ENCODE measurements at regions of chr19 and their contacts with region 1.

Region 1: DNA sequence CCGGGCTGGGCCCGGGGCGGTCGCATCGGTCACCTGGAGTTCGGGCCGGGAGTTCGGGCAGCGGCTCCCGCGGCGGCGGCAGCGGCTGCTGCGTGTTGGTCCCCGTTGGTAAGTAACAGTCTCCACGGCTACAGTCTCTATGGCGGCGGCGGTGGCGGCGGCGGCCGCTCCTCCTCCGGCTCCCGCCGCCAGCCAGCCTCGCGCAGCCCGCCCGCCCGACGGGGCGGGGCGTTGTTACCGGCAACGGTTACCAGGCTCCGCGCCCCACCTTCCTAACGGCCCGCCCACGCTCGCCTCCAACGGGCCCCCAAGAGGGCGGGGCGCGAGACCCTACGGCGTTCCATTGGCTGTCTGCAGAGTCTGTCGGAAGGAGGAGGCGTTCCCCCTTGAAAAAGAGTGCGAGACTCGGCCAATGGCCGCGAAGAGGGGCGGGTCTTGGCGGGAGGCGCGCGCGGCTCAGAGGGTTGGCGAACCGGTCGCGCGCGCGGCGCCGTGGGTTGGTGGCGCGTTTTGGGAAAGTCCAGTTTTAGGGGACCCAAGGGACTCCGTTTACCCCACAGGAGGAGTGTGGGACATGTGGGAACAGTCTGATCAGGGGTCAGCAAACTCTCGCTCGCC is at the start of gene RFX2:
- DNase-seq: peak; percentile 100
- ATAC-seq: peak; percentile 98
- H3K4me3 ChIP-seq: peak within 1 kb of the TSS; percentile 70
- H3K27ac ChIP-seq: no peak within 1 kb of the TSS
- H3K4me1 ChIP-seq: peaks cover 12% of the 10 kb centered on the region
- H3K27me3 ChIP-seq: no peaks in the 10 kb centered on the region
- CTCF ChIP-seq: no peak
- total RNA-seq, gene RFX2: 10.5 and 11.3 TPM in 2 replicates

Region 2: GRCh38 chr19:6066661-6067646 is 43.5 kb before region 1 on chr19:
- CTCF ChIA-PET with region 1: no interaction called
- POLR2A ChIA-PET with region 1: no interaction called
- intact Hi-C with region 1: loop called (anchors 1 kb)
- DNase-seq: peak; percentile 92
- ATAC-seq: peak; percentile 48
- H3K4me3 ChIP-seq: peak overlapping the region; percentile 42
- H3K27ac ChIP-seq: peak overlapping the region; percentile 86
- H3K4me1 ChIP-seq: peaks cover 42% of the 10 kb centered on the region
- H3K27me3 ChIP-seq: no peaks in the 10 kb centered on the region
- CTCF ChIP-seq: no peak